Esophagus muscularis mucosa (tissue), 4 donors: ENCODE measurements at regions of chr15 and their contacts with region 1.

Region 1: GRCh38 chr15:75307778-75308391 is 25.2 kb downstream of the GOLGA6D start:
- DNase-seq: no peak
- H3K4me3 ChIP-seq: no peak overlapping the region
- H3K27ac ChIP-seq: no peak overlapping the region
- H3K4me1 ChIP-seq: no peaks in the 10 kb centered on the region
- H3K27me3 ChIP-seq: peaks cover 0 to 44% (median 2%) of the 10 kb centered on the region in 4 donors
- CTCF ChIP-seq: peak in 1 of 3 experiments; percentile 15
- EP300 ChIP-seq: no peak
- POLR2A ChIP-seq: no peak

Region 2: GRCh38 chr15:75023181-75023871 is 284.6 kb before region 1 on chr15 and contains the start of gene PPCDC:
- intact Hi-C with region 1: loop called (anchors 10 kb)
- DNase-seq: peak; percentile 97
- H3K4me3 ChIP-seq: peak within 1 kb of the TSS; percentile 75 to 90 (median 87)
- H3K27ac ChIP-seq: peak within 1 kb of the TSS; percentile 87 to 90 (median 88)
- H3K4me1 ChIP-seq: peaks cover 11 to 27% (median 16%) of the 10 kb centered on the region in 4 donors
- H3K27me3 ChIP-seq: no peaks in the 10 kb centered on the region
- CTCF ChIP-seq: peak in 2 of 3 experiments; percentile 9 to 35
- EP300 ChIP-seq: no peak
- POLR2A ChIP-seq: peak; percentile 43
- total RNA-seq, gene PPCDC: 6.4 to 8.9 (median 7.4) TPM

Region 3: DNA sequence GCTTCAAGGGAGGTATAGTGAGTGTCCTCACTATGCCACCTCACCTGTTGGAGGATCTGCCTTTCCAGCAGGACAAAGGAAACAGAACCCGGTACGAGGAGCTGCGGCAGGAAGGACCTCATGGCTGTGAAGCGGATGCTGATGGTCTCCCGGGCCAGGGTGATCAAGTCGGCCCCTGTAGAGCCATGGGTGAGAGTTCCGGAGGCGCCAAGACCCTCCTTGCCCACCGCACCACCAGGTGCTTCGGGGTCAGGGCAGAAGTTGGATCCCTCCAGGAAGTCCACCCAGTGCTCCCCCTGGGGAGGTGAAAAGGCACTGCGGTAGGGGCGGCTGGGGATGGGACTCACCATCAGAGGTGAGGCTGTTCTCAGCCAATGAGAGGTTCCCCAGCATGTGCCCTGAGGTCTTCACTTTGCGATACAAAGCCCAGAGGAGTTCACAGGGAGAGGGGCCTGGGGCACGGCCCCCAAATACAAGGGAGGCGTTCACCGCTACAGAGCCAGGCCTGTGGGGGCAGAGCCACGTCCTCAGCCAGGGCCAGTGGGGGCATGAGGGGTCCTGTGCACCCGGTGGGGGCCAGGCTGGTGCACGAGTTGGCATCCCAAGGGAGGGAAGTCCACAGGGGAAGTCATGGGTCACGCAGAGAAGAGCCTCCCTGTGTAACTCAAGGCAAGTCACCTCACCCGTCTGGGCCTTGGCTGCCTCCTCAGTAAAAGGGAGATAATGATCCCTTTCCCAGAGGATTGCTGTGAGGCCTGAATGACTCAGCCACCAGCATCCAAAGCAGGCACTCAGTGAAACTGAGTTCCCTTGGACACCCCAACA is 78.5 kb before region 1 on chr15:
- intact Hi-C with region 1: loop called (anchors 10 kb)
- DNase-seq: no peak
- H3K4me3 ChIP-seq: no peak overlapping the region
- H3K27ac ChIP-seq: no peak overlapping the region
- H3K4me1 ChIP-seq: no peaks in the 10 kb centered on the region
- H3K27me3 ChIP-seq: peaks cover 0 to 47% (median 0%) of the 10 kb centered on the region in 4 donors
- CTCF ChIP-seq: no peak
- EP300 ChIP-seq: no peak
- POLR2A ChIP-seq: no peak